ENCODE measurements at regions of chr15 and their contacts with region 1.

Region 1: DNA sequence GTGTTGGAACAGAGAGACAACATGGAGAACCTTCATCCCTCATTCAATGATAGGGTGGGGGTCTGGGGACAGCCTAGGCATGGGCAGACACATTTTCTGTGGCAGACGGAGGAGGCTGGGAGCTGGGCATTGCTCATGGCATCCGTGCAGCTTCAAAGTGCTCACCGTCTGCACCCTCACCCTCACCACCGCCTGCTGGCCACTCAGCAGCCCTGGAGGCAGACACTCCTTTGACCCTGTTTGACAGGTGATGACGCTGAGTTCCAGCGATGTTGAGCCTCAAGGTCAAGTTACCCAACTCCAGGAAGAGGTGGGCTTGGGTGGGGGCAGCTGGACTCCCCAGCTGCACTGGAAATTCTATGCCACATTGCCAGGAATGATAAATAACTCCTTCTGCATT is 58.2 kb upstream of the CHRNA7 start:
- DNase-seq: no peak
- H3K4me3 Mint-ChIP-seq: no peak overlapping the region
- H3K27ac Mint-ChIP-seq: no peak overlapping the region
- H3K4me1 Mint-ChIP-seq: peaks cover 7% of the 10 kb centered on the region
- H3K27me3 Mint-ChIP-seq: peaks cover 58% of the 10 kb centered on the region
- CTCF ChIP-seq: no peak

Region 2: GRCh38 chr15:31571671-31572070 is 400.4 kb before region 1 on chr15:
- CTCF ChIA-PET with region 1: interaction called, 33 read pairs
- POLR2A ChIA-PET with region 1: no interaction called
- intact Hi-C with region 1: loop called (anchors 2 kb)
- DNase-seq: peak; percentile 41
- H3K4me3 Mint-ChIP-seq: no peak overlapping the region
- H3K27ac Mint-ChIP-seq: no peak overlapping the region
- H3K4me1 Mint-ChIP-seq: peaks cover 5% of the 10 kb centered on the region
- H3K27me3 Mint-ChIP-seq: no peaks in the 10 kb centered on the region
- CTCF ChIP-seq: peak; percentile 42

Region 3: DNA sequence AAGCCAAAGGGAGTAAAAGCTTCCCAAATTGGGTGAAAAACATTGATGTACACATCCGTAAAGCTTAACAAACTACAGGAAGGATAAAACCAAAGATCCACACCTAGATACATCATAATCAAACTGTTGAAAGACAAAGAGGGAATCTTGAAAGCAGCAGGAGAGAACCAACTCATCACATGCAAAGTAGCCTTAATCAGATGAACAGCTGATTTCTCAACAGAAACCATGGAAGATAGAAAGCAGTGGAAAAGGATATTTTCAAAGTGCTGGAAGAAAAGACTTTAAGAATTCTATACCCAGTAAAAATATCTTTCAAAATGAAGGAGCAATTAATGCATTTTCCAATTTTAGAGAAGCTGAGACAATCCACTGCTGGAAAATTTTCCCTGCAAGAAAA is 95.0 kb after region 1 on chr15:
- CTCF ChIA-PET with region 1: no interaction called
- POLR2A ChIA-PET with region 1: no interaction called
- intact Hi-C with region 1: no loop called
- DNase-seq: no peak
- H3K4me3 Mint-ChIP-seq: no peak overlapping the region
- H3K27ac Mint-ChIP-seq: no peak overlapping the region
- H3K4me1 Mint-ChIP-seq: no peaks in the 10 kb centered on the region
- H3K27me3 Mint-ChIP-seq: peaks cover 7% of the 10 kb centered on the region
- CTCF ChIP-seq: no peak

Measured in MCF 10A (cell line).